CD4-positive, alpha-beta memory T cell (primary cell): ENCODE measurements at regions of chr12 and their contacts with region 1.

Region 1: GRCh38 chr12:68364893-68365725 is 32.9 kb upstream of the MDM1 start:
- DNase-seq: peak; percentile 82 to 91 (median 88)
- H3K4me3 ChIP-seq: peak overlapping the region in 1 of 2 donors; percentile 51
- H3K4me3 Mint-ChIP-seq: peak overlapping the region; percentile 77 to 92 (median 84)
- H3K27ac ChIP-seq: peak overlapping the region; percentile 76
- H3K27ac Mint-ChIP-seq: peak overlapping the region; percentile 91 to 97 (median 96)
- H3K4me1 ChIP-seq: peaks cover 59% of the 10 kb centered on the region
- H3K4me1 Mint-ChIP-seq: peaks cover 54 to 81% (median 60%) of the 10 kb centered on the region in 4 donors
- H3K27me3 ChIP-seq: no peaks in the 10 kb centered on the region
- H3K27me3 Mint-ChIP-seq: no peaks in the 10 kb centered on the region

Region 2: GRCh38 chr12:68067762-68068376 is 297.2 kb before region 1 on chr12:
- CTCF ChIA-PET with region 1: no interaction called
- POLR2A ChIA-PET with region 1: no interaction called
- intact Hi-C with region 1: no loop called
- DNase-seq: no peak
- H3K4me3 ChIP-seq: no peak overlapping the region
- H3K4me3 Mint-ChIP-seq: peak overlapping the region in 1 of 8 donors; percentile 1
- H3K27ac ChIP-seq: no peak overlapping the region
- H3K27ac Mint-ChIP-seq: no peak overlapping the region
- H3K4me1 ChIP-seq: no peaks in the 10 kb centered on the region
- H3K4me1 Mint-ChIP-seq: no peaks in the 10 kb centered on the region
- H3K27me3 ChIP-seq: no peaks in the 10 kb centered on the region
- H3K27me3 Mint-ChIP-seq: peaks cover 0 to 2% of the 10 kb centered on the region in 2 donors

Region 3: DNA sequence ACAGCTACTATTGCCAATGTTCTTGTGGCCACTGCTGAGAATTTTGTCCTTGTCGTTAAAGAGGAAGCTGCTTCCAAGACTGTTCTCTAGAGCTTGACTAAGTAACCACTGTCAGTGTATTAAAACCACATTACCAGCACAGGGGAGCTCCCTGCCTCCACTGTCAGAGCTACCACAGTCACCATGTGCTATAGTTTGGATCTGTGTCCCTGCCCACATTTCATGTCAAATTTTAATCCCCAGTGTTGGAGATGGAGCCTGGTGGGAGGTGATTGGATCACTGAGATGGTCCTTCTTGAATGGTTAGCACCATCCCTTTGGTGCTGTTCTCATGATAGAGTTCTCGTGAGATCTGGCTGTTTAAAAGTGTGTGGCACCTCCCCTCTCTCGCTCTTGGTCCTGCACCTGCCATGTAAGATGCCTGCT is 222.4 kb after region 1 on chr12:
- CTCF ChIA-PET with region 1: no interaction called
- POLR2A ChIA-PET with region 1: interaction called, 7 read pairs
- intact Hi-C with region 1: loop called (anchors 2 kb)
- DNase-seq: peak in 4 of 5 donors; percentile 36 to 50 (median 48)
- H3K4me3 ChIP-seq: no peak overlapping the region
- H3K4me3 Mint-ChIP-seq: peak overlapping the region in 5 of 8 donors; percentile 17 to 44 (median 22)
- H3K27ac ChIP-seq: no peak overlapping the region
- H3K27ac Mint-ChIP-seq: peak overlapping the region in 5 of 7 donors; percentile 15 to 80 (median 59)
- H3K4me1 ChIP-seq: peaks cover 37% of the 10 kb centered on the region
- H3K4me1 Mint-ChIP-seq: peaks cover 29 to 43% (median 37%) of the 10 kb centered on the region in 4 donors
- H3K27me3 ChIP-seq: no peaks in the 10 kb centered on the region
- H3K27me3 Mint-ChIP-seq: no peaks in the 10 kb centered on the region

Region 4: GRCh38 chr12:68675101-68675842 is 310.2 kb after region 1 on chr12:
- CTCF ChIA-PET with region 1: no interaction called
- POLR2A ChIA-PET with region 1: interaction called, 14 read pairs
- intact Hi-C with region 1: no loop called
- DNase-seq: peak; percentile 66 to 76 (median 75)
- H3K4me3 ChIP-seq: no peak overlapping the region
- H3K4me3 Mint-ChIP-seq: peak overlapping the region; percentile 60 to 89 (median 73)
- H3K27ac ChIP-seq: peak overlapping the region; percentile 24
- H3K27ac Mint-ChIP-seq: peak overlapping the region; percentile 80 to 94 (median 92)
- H3K4me1 ChIP-seq: peaks cover 55% of the 10 kb centered on the region
- H3K4me1 Mint-ChIP-seq: peaks cover 32 to 59% (median 45%) of the 10 kb centered on the region in 4 donors
- H3K27me3 ChIP-seq: no peaks in the 10 kb centered on the region
- H3K27me3 Mint-ChIP-seq: no peaks in the 10 kb centered on the region